CD8-positive, alpha-beta T cell (primary cell): ENCODE measurements at regions of chr12 and their contacts with region 1.

Region 1: GRCh38 chr12:103548622-103549601 is 38.2 kb upstream of the STAB2 start:
- DNase-seq: peak; percentile 37 to 81 (median 70)
- ATAC-seq: peak; percentile 44
- H3K4me3 ChIP-seq: no peak overlapping the region
- H3K4me3 Mint-ChIP-seq: no peak overlapping the region
- H3K27ac ChIP-seq: no peak overlapping the region
- H3K27ac Mint-ChIP-seq: no peak overlapping the region
- H3K4me1 ChIP-seq: no peaks in the 10 kb centered on the region
- H3K4me1 Mint-ChIP-seq: peaks cover 4% of the 10 kb centered on the region
- H3K27me3 ChIP-seq: no peaks in the 10 kb centered on the region
- H3K27me3 Mint-ChIP-seq: peaks cover 15% of the 10 kb centered on the region
- CTCF ChIP-seq: peak; percentile 95

Region 2: DNA sequence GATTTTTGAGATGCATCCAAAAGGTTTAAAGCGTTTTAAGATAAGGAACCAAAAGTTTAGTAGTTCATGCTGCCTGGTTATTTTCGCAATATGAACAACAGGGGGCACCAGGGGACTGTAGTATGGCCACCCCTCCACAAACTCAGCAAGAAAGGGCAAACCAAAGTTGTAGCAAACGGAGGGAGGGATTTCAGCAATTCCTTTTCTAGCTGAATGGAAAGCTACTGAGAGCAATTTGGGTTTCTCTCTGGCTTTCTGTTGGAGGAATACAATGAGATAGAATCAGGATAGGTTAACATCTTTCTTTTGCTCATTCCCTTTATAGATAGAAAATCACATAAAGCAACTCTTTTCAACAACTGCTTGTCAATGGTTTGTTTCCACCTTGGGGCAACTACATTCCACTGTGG is 1609.1 kb before region 1 on chr12:
- CTCF ChIA-PET with region 1: interaction called, 14 read pairs
- POLR2A ChIA-PET with region 1: no interaction called
- intact Hi-C with region 1: loop called in 1 of 2 experiments (anchors 1 kb)
- DNase-seq: peak in 8 of 9 experiments; percentile 28 to 73 (median 54)
- ATAC-seq: peak; percentile 75
- H3K4me3 ChIP-seq: no peak overlapping the region
- H3K4me3 Mint-ChIP-seq: no peak overlapping the region
- H3K27ac ChIP-seq: no peak overlapping the region
- H3K27ac Mint-ChIP-seq: no peak overlapping the region
- H3K4me1 ChIP-seq: no peaks in the 10 kb centered on the region
- H3K4me1 Mint-ChIP-seq: no peaks in the 10 kb centered on the region
- H3K27me3 ChIP-seq: no peaks in the 10 kb centered on the region
- H3K27me3 Mint-ChIP-seq: peaks cover 8% of the 10 kb centered on the region
- CTCF ChIP-seq: peak; percentile 73

Region 3: DNA sequence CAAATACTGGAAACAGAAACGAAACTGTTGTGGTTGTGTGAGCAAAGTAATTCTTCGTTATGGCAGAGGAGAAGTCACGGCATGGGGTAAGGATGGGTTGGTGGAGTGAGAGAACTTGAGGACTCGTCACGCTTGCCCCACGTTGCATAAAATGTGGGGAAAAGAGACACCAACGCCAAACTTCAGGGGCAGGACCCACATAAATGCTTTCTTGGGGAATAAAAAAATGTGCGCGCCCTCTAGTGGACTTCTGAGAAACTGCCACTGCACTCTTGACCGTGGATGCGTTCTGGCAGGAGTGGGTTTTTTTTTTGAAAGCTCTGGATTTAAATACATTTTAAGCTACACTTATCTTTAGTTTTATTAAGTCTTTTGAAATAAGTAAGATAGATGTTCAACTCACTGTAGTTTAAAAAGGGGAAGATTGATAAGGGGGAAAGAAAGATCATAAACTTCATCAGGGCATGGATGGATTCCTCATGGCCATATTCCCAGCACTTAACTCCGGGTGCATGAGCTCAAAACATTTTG is 1064.4 kb before region 1 on chr12:
- CTCF ChIA-PET with region 1: no interaction called
- POLR2A ChIA-PET with region 1: no interaction called
- intact Hi-C with region 1: loop called in 1 of 2 experiments (anchors 10 kb)
- DNase-seq: peak; percentile 9 to 70 (median 41)
- ATAC-seq: peak; percentile 38
- H3K4me3 ChIP-seq: peak overlapping the region in 1 of 2 experiments; percentile 10
- H3K4me3 Mint-ChIP-seq: peak overlapping the region; percentile 78
- H3K27ac ChIP-seq: no peak overlapping the region
- H3K27ac Mint-ChIP-seq: no peak overlapping the region
- H3K4me1 ChIP-seq: peaks cover 7% of the 10 kb centered on the region
- H3K4me1 Mint-ChIP-seq: peaks cover 4% of the 10 kb centered on the region
- H3K27me3 ChIP-seq: no peaks in the 10 kb centered on the region
- H3K27me3 Mint-ChIP-seq: peaks cover 4% of the 10 kb centered on the region
- CTCF ChIP-seq: peak; percentile 99

Region 4: GRCh38 chr12:102948941-102949352 is 600.0 kb before region 1 on chr12:
- CTCF ChIA-PET with region 1: interaction called, 114 read pairs
- POLR2A ChIA-PET with region 1: no interaction called
- intact Hi-C with region 1: loop called (anchors 1 kb)
- DNase-seq: peak in 8 of 9 experiments; percentile 24 to 70 (median 56)
- ATAC-seq: no peak
- H3K4me3 ChIP-seq: no peak overlapping the region
- H3K4me3 Mint-ChIP-seq: no peak overlapping the region
- H3K27ac ChIP-seq: no peak overlapping the region
- H3K27ac Mint-ChIP-seq: no peak overlapping the region
- H3K4me1 ChIP-seq: no peaks in the 10 kb centered on the region
- H3K4me1 Mint-ChIP-seq: peaks cover 4% of the 10 kb centered on the region
- H3K27me3 ChIP-seq: peaks cover 6 to 8% of the 10 kb centered on the region in 2 experiments
- H3K27me3 Mint-ChIP-seq: peaks cover 50% of the 10 kb centered on the region
- CTCF ChIP-seq: peak; percentile 94

Region 5: DNA sequence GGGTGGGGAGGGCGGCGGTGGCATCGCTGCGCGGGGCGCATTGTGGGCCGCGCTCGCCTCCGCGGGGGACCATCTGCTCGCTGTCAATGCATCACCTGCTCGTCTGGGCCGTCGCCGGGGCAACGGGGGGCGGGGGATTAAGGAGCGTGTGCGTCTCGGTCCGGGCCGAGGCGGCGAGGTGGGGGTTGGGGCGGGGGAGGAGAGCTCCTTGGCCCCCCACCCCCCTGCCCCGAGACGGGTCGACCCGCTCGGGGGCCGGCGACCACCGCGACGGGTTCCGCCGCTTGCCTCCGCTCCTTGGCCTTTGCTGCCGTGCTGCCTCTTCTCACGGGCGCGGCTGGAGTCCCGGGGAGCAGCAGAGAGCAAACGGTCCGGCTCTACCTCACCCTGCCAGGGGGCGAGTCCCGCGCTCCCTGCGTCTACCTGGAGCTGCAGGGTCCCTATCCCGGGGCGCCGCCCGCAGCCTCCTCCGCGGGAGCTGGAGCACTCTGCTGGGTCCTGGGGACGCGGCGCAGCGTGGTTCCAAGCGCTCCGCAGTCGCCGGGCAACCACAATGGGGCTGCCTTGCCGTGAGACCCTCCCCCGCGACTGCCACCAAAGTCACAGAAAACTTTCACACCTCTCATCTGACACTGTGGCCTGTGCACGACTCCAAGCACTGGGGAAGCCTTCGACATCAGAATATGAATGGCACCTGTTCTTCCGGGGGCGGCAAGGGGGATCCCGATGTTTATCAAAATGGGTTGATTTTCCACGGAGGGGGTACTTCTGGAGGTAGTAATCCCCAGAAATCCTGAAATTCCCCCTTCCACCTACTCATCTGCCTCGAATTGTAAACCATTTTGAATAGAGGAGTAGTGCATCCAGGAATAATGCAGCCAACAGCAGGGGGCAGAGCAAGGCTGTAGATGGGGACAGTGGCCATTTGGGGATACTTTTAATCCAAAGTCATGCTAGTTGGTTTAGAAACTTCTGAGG is 53.1 kb before region 1 on chr12 and contains the start of gene C12orf42:
- CTCF ChIA-PET with region 1: interaction called, 11 read pairs
- POLR2A ChIA-PET with region 1: no interaction called
- intact Hi-C with region 1: loop called in 1 of 2 experiments (anchors 2 kb)
- DNase-seq: peak in 8 of 9 experiments; percentile 44 to 82 (median 74)
- ATAC-seq: peak; percentile 79
- H3K4me3 ChIP-seq: peak within 1 kb of the TSS; percentile 53 to 66
- H3K4me3 Mint-ChIP-seq: peak within 1 kb of the TSS; percentile 83
- H3K27ac ChIP-seq: peak within 1 kb of the TSS; percentile 39 to 46
- H3K27ac Mint-ChIP-seq: peak within 1 kb of the TSS; percentile 86
- H3K4me1 ChIP-seq: peaks cover 19% of the 10 kb centered on the region
- H3K4me1 Mint-ChIP-seq: peaks cover 19% of the 10 kb centered on the region
- H3K27me3 ChIP-seq: peaks cover 0 to 2% of the 10 kb centered on the region in 2 experiments
- H3K27me3 Mint-ChIP-seq: peaks cover 7% of the 10 kb centered on the region
- CTCF ChIP-seq: peak; percentile 29
- total RNA-seq, gene C12orf42: 5.5 to 8.8 TPM

Region 6: GRCh38 chr12:103530307-103531066 is 18.4 kb before region 1 on chr12:
- CTCF ChIA-PET with region 1: interaction called, 25 read pairs
- POLR2A ChIA-PET with region 1: no interaction called
- intact Hi-C with region 1: no loop called
- DNase-seq: no peak
- ATAC-seq: no peak
- H3K4me3 ChIP-seq: no peak overlapping the region
- H3K4me3 Mint-ChIP-seq: no peak overlapping the region
- H3K27ac ChIP-seq: no peak overlapping the region
- H3K27ac Mint-ChIP-seq: no peak overlapping the region
- H3K4me1 ChIP-seq: no peaks in the 10 kb centered on the region
- H3K4me1 Mint-ChIP-seq: no peaks in the 10 kb centered on the region
- H3K27me3 ChIP-seq: no peaks in the 10 kb centered on the region
- H3K27me3 Mint-ChIP-seq: no peaks in the 10 kb centered on the region
- CTCF ChIP-seq: no peak

Region 7: GRCh38 chr12:103560604-103561573 is 12.0 kb after region 1 on chr12:
- CTCF ChIA-PET with region 1: interaction called, 17 read pairs
- POLR2A ChIA-PET with region 1: no interaction called
- intact Hi-C with region 1: no loop called
- DNase-seq: no peak
- ATAC-seq: no peak
- H3K4me3 ChIP-seq: no peak overlapping the region
- H3K4me3 Mint-ChIP-seq: no peak overlapping the region
- H3K27ac ChIP-seq: no peak overlapping the region
- H3K27ac Mint-ChIP-seq: no peak overlapping the region
- H3K4me1 ChIP-seq: no peaks in the 10 kb centered on the region
- H3K4me1 Mint-ChIP-seq: no peaks in the 10 kb centered on the region
- H3K27me3 ChIP-seq: no peaks in the 10 kb centered on the region
- H3K27me3 Mint-ChIP-seq: peaks cover 20% of the 10 kb centered on the region
- CTCF ChIP-seq: no peak